SK-N-SH (cell line): ENCODE measurements at regions of chr2 and their contacts with region 1.

Region 1: DNA sequence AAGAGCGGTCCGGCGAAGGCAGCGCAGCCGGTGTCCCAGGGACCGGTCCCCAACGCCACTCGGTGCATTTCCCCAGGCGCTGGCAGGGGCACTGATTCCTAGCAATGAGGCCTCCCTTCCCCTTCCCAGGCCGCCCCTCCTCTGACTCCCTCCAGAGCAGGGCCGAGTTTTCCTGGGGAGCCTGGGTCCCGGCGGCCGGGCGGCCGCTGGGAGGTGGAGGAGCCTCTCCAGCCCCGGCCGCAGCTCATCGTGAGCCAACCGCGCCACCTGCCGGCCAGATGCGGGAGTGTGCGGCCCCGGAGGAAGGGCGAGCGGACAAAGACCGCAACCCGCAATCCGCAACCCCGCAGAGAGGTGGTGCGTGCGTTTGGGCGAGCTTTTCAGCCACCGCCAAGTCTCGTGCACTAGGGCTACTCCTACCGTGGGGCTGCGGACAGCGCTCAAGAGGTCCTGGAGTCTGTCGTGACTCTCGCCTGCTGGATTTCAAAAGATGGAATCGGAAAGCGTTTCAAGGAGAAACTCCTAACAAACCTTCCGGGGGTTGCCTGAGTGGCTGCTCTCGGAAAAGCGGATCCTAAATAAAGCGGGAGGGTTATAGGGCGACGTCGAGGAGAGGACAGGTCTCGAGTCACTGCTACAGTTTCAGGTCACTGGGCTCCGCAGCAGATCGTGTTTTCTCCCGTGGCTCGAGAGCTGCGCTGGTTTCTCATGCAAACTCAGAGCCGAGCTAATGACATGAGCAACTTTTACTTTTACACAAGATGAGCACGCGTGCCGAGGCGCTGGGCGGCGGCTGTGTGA is 1.5 kb upstream of the EPHA4 start:
- DNase-seq: peak; percentile 91
- H3K4me3 ChIP-seq: peak overlapping the region; percentile 50 to 74
- H3K27ac ChIP-seq: no peak overlapping the region
- H3K4me1 ChIP-seq: peaks cover 0 to 10% of the 10 kb centered on the region in 2 experiments; a peak in 1 of 4 replicates
- H3K27me3 ChIP-seq: peaks cover 58% of the 10 kb centered on the region
- CTCF ChIP-seq: peak; percentile 88
- EP300 ChIP-seq: no peak
- RAD21 ChIP-seq: peak; percentile 87

Region 2: DNA sequence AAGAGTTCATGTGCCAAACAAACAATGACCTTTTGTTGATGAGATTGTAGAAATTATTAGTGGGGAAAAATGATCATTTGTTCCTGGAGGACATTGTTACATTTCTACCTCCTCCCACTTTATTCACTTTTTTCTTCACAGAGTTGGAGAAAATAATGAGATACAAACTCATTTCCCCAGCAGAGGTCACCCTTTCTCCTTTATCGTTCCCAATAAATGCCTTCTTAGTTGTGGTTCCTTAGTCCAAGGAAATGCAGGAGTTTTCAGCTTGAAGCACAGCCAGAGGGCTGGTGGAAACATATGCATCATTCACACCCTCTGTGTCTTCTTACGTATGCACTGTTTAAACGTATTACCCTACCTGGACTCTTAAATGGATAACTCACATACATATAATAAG is 1837.4 kb before region 1 on chr2:
- CTCF ChIA-PET with region 1: interaction called, 20 read pairs
- POLR2A ChIA-PET with region 1: no interaction called
- DNase-seq: peak; percentile 49
- H3K4me3 ChIP-seq: no peak overlapping the region; a peak in 1 of 4 replicates
- H3K27ac ChIP-seq: no peak overlapping the region
- H3K4me1 ChIP-seq: no peaks in the 10 kb centered on the region
- H3K27me3 ChIP-seq: peaks cover 4% of the 10 kb centered on the region; the same call in 1 of the 2 replicates
- CTCF ChIP-seq: peak; percentile 69
- EP300 ChIP-seq: no peak
- RAD21 ChIP-seq: peak; percentile 77

Region 3: GRCh38 chr2:220687231-220687843 is 886.3 kb before region 1 on chr2:
- CTCF ChIA-PET with region 1: interaction called, 25 read pairs
- POLR2A ChIA-PET with region 1: no interaction called
- DNase-seq: peak; percentile 52
- H3K4me3 ChIP-seq: peak overlapping the region in 1 of 2 experiments; percentile 46; a peak in 1 of 4 replicates
- H3K27ac ChIP-seq: no peak overlapping the region
- H3K4me1 ChIP-seq: no peaks in the 10 kb centered on the region
- H3K27me3 ChIP-seq: no peaks in the 10 kb centered on the region
- CTCF ChIP-seq: peak; percentile 84
- EP300 ChIP-seq: no peak
- RAD21 ChIP-seq: peak; percentile 77

Region 4: GRCh38 chr2:221554769-221555493 is 18.7 kb before region 1 on chr2:
- CTCF ChIA-PET with region 1: interaction called, 26 read pairs
- POLR2A ChIA-PET with region 1: no interaction called
- DNase-seq: no peak
- H3K4me3 ChIP-seq: no peak overlapping the region
- H3K27ac ChIP-seq: no peak overlapping the region
- H3K4me1 ChIP-seq: no peaks in the 10 kb centered on the region
- H3K27me3 ChIP-seq: no peaks in the 10 kb centered on the region
- CTCF ChIP-seq: no peak
- EP300 ChIP-seq: no peak
- RAD21 ChIP-seq: no peak

Region 5: GRCh38 chr2:221590861-221591365 is 17.3 kb after region 1 on chr2:
- CTCF ChIA-PET with region 1: interaction called, 14 read pairs
- POLR2A ChIA-PET with region 1: no interaction called
- DNase-seq: no peak
- H3K4me3 ChIP-seq: no peak overlapping the region
- H3K27ac ChIP-seq: no peak overlapping the region
- H3K4me1 ChIP-seq: no peaks in the 10 kb centered on the region
- H3K27me3 ChIP-seq: peaks cover 14% of the 10 kb centered on the region
- CTCF ChIP-seq: no peak
- EP300 ChIP-seq: no peak
- RAD21 ChIP-seq: no peak

Region 6: GRCh38 chr2:221747289-221747972 is 173.8 kb after region 1 on chr2:
- CTCF ChIA-PET with region 1: no interaction called
- POLR2A ChIA-PET with region 1: no interaction called
- DNase-seq: no peak
- H3K4me3 ChIP-seq: no peak overlapping the region
- H3K27ac ChIP-seq: no peak overlapping the region
- H3K4me1 ChIP-seq: no peaks in the 10 kb centered on the region
- H3K27me3 ChIP-seq: no peaks in the 10 kb centered on the region
- CTCF ChIP-seq: no peak
- EP300 ChIP-seq: no peak
- RAD21 ChIP-seq: no peak